CD8-positive, alpha-beta T cell (primary cell): ENCODE measurements at regions of chr22 and their contacts with region 1.

Region 1: GRCh38 chr22:40418366-40419201 is 48.2 kb downstream of the SGSM3 start:
- DNase-seq: peak in 5 of 9 experiments; percentile 23 to 90 (median 70)
- ATAC-seq: peak; percentile 94
- H3K4me3 ChIP-seq: no peak overlapping the region
- H3K4me3 Mint-ChIP-seq: no peak overlapping the region
- H3K27ac ChIP-seq: no peak overlapping the region
- H3K27ac Mint-ChIP-seq: peak overlapping the region; percentile 60
- H3K4me1 ChIP-seq: peaks cover 43% of the 10 kb centered on the region
- H3K4me1 Mint-ChIP-seq: peaks cover 55% of the 10 kb centered on the region
- H3K27me3 ChIP-seq: no peaks in the 10 kb centered on the region
- H3K27me3 Mint-ChIP-seq: no peaks in the 10 kb centered on the region
- CTCF ChIP-seq: no peak

Region 2: GRCh38 chr22:40374567-40374966 is 44.0 kb before region 1 on chr22:
- CTCF ChIA-PET with region 1: no interaction called
- POLR2A ChIA-PET with region 1: interaction called, 7 read pairs
- intact Hi-C with region 1: loop called (anchors 2 to 5 kb)
- DNase-seq: no peak
- ATAC-seq: no peak
- H3K4me3 ChIP-seq: no peak overlapping the region
- H3K4me3 Mint-ChIP-seq: no peak overlapping the region
- H3K27ac ChIP-seq: no peak overlapping the region
- H3K27ac Mint-ChIP-seq: no peak overlapping the region
- H3K4me1 ChIP-seq: peaks cover 26% of the 10 kb centered on the region
- H3K4me1 Mint-ChIP-seq: peaks cover 58% of the 10 kb centered on the region
- H3K27me3 ChIP-seq: no peaks in the 10 kb centered on the region
- H3K27me3 Mint-ChIP-seq: no peaks in the 10 kb centered on the region
- CTCF ChIP-seq: no peak

Region 3: GRCh38 chr22:40443732-40444131 is 25.1 kb after region 1 on chr22:
- CTCF ChIA-PET with region 1: no interaction called
- POLR2A ChIA-PET with region 1: no interaction called
- intact Hi-C with region 1: no loop called
- DNase-seq: no peak
- ATAC-seq: no peak
- H3K4me3 ChIP-seq: no peak overlapping the region
- H3K4me3 Mint-ChIP-seq: no peak overlapping the region
- H3K27ac ChIP-seq: no peak overlapping the region
- H3K27ac Mint-ChIP-seq: peak overlapping the region; percentile 7
- H3K4me1 ChIP-seq: peaks cover 59% of the 10 kb centered on the region
- H3K4me1 Mint-ChIP-seq: peaks cover 79% of the 10 kb centered on the region
- H3K27me3 ChIP-seq: no peaks in the 10 kb centered on the region
- H3K27me3 Mint-ChIP-seq: no peaks in the 10 kb centered on the region
- CTCF ChIP-seq: no peak

Region 4: GRCh38 chr22:40818747-40819598 is 400.4 kb after region 1 on chr22 and contains the start of gene SLC25A17:
- CTCF ChIA-PET with region 1: no interaction called
- POLR2A ChIA-PET with region 1: no interaction called
- intact Hi-C with region 1: no loop called
- DNase-seq: peak; percentile 72 to 93 (median 88)
- ATAC-seq: peak; percentile 88
- H3K4me3 ChIP-seq: peak within 1 kb of the TSS; percentile 87 to 91
- H3K4me3 Mint-ChIP-seq: peak within 1 kb of the TSS; percentile 96
- H3K27ac ChIP-seq: peak within 1 kb of the TSS; percentile 69 to 81
- H3K27ac Mint-ChIP-seq: peak within 1 kb of the TSS; percentile 88
- H3K4me1 ChIP-seq: peaks cover 18% of the 10 kb centered on the region
- H3K4me1 Mint-ChIP-seq: peaks cover 41% of the 10 kb centered on the region
- H3K27me3 ChIP-seq: no peaks in the 10 kb centered on the region
- H3K27me3 Mint-ChIP-seq: no peaks in the 10 kb centered on the region
- CTCF ChIP-seq: no peak
- total RNA-seq, gene SLC25A17: 3.2 to 4.0 TPM